ENCODE measurements at regions of chr2 and their contacts with region 1.

Region 1: DNA sequence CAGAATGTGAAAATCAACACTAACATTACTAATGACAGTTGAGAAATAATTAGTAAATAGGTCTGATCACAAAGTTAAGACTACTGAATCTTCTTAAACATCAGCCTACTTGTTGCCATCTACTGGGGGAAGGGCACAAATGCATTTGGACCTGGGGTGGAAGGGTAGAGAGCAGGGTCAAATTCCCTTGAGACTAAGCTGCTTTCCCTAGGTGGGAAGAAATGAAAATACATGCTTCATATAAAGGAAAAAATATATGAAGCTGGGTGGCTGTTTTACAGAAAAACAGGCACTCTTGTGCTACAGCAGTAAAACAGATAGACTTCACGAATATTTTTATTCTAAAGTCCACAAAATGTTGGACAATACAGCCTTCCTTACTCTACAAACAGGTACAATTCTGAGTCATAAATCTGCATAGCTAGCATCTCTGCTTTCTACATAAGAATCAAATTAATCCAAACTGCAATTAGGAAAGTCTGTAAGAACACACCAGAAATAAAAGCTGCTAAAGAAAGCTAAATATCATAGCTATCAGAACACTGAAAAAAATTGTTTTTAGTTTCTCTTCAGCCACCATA is 10.9 kb downstream of the TRIP12 start:
- DNase-seq: peak; percentile 5 to 43
- H3K4me3 ChIP-seq: no peak overlapping the region
- H3K4me3 Mint-ChIP-seq: no peak overlapping the region
- H3K27ac Mint-ChIP-seq: no peak overlapping the region
- H3K4me1 ChIP-seq: 0 out of 2 replicates have a peak, but pooled peaks cover 7% of the 10 kb centered on the region
- H3K4me1 Mint-ChIP-seq: peaks cover 13% of the 10 kb centered on the region
- H3K27me3 ChIP-seq: no peaks in the 10 kb centered on the region
- H3K27me3 Mint-ChIP-seq: no peaks in the 10 kb centered on the region
- CTCF ChIP-seq: peak in 1 of 2 experiments; percentile 36

Region 2: DNA sequence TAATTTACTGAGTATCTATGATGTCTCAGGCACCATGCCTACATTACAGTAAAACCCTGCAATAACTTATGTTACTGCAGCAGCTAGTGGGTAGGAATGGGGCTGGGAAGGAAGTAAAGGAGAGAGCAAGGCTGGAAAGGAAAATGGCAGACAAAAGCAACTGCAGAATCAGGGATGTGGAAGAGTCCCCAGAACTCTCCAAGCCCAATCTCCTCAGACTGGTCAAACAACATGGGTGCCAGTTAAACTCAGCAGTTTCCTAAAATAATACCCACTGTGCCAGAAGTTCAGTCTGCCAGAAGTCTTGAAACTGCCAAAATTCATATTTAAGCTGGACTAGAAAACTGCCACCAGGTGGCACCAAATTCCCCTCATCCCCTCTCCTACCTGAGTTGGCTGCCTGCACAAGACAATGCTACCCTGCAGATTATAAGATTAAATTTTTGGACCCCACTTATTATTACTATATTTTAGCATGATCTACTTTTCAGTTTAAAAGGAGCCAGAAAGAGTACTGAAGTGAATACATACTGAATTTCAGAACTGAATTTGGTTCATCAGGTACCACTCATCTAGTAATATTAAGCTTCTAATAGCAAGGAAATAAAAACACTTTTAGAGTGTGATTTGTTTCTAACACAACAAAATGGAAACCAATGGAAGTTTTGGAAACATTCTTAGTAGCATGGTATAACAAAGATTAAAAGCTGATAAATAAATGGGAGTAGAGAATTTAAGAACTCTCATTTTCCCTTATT is 109.7 kb before region 1 on chr2:
- CTCF ChIA-PET with region 1: interaction called, 13 read pairs
- POLR2A ChIA-PET with region 1: no interaction called
- intact Hi-C with region 1: loop called (anchors 1 kb)
- DNase-seq: peak; percentile 45 to 53
- H3K4me3 ChIP-seq: no peak overlapping the region
- H3K4me3 Mint-ChIP-seq: no peak overlapping the region
- H3K27ac Mint-ChIP-seq: no peak overlapping the region
- H3K4me1 ChIP-seq: no peaks in the 10 kb centered on the region
- H3K4me1 Mint-ChIP-seq: no peaks in the 10 kb centered on the region
- H3K27me3 ChIP-seq: no peaks in the 10 kb centered on the region
- H3K27me3 Mint-ChIP-seq: no peaks in the 10 kb centered on the region
- CTCF ChIP-seq: peak; percentile 53 to 66

Measured in Caco-2 (cell line).